Activated T-helper 1 cell treated with anti-CD3 and anti-CD28 coated beads, Interleukin-12 subunit alpha, Interleukin-12 subunit beta, Interleukin-2, Interleukin-4 antibody, amounts not matched to agents 30 ng/mL and 10 ng/mL and 1 ng/mL, durations not matched to agents 14 hours and 24 hours and 36 hours (primary cell): ENCODE measurements at regions of chr13 and their contacts with region 1.

Region 1: DNA sequence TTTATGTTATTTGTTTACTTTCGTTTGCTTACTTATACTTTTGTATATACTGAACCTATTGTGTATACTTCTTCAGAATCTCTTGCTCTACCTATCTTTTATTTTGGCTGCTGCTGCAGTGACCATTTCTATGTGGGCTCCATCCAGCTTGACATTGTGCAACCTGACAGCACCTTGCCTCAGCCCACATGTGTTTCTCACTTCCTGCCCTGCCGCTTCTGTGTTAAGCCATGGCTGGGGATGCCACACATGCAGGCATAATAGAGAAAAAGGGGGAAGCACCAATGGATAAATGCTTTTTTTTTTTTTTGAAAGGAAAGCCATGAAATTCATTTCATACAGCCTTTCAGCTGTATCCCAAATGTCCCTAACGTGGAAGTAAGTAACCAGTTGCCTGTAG is 147.6 kb downstream of the RBM26 start:
- DNase-seq: no peak
- H3K4me3 Mint-ChIP-seq: no peak overlapping the region
- H3K27ac Mint-ChIP-seq: no peak overlapping the region
- H3K4me1 Mint-ChIP-seq: no peaks in the 10 kb centered on the region
- H3K27me3 Mint-ChIP-seq: peaks cover 5% of the 10 kb centered on the region

Region 2: DNA sequence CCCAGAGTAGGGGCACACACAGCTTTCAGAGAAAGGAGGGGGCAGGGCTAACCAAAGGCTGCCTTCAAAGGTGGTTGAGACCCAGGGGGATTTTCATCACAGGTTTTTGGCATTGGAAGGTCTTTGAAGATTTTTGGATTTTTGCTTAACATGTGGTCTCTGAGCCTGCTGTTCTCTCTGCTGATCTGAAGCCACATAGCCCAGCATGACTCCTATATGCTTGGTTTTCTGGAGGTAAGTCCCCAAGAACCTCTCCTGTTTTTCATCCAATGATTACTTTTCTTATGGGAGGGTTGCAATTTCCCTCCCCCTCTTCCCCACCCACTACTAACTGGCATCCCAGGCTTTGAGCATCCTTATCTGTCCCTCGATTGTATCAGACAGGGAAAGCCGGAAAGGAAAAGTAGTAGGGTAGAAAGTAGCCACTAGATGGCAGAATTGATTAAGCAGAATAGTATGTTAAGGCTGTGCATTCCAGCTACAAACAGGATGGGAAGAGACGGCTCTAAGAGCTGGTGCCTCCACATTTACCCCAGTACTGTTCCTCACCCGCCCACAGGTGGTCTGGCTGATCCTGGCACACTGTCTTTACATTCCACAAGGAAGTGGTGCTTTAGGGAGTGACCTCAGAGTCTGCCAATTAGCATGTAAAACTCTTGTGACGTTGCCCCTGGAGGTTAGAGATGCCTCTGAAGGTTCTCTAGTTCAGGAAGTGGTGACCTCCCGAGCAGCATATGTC is 1120.9 kb before region 1 on chr13:
- intact Hi-C with region 1: loop called (anchors 5 kb)
- DNase-seq: no peak
- H3K4me3 Mint-ChIP-seq: no peak overlapping the region
- H3K27ac Mint-ChIP-seq: no peak overlapping the region
- H3K4me1 Mint-ChIP-seq: peaks cover 5% of the 10 kb centered on the region
- H3K27me3 Mint-ChIP-seq: peaks cover 2% of the 10 kb centered on the region